Activated naive CD4-positive, alpha-beta T cell treated with anti-CD3 and anti-CD28 coated beads for 36 hours (primary cell): ENCODE measurements at regions of chr13 and their contacts with region 1.

Region 1: GRCh38 chr13:50130123-50130946 is 115.1 kb downstream of the KCNRG start:
- DNase-seq: peak; percentile 24
- H3K4me3 Mint-ChIP-seq: peak overlapping the region; percentile 66
- H3K27ac Mint-ChIP-seq: peak overlapping the region; percentile 50
- H3K4me1 Mint-ChIP-seq: peaks cover 62% of the 10 kb centered on the region
- H3K27me3 Mint-ChIP-seq: peaks cover 60% of the 10 kb centered on the region

Region 2: GRCh38 chr13:49967456-49967855 is 162.9 kb before region 1 on chr13:
- CTCF ChIA-PET with region 1: no interaction called
- intact Hi-C with region 1: no loop called
- DNase-seq: no peak
- H3K4me3 Mint-ChIP-seq: no peak overlapping the region
- H3K27ac Mint-ChIP-seq: no peak overlapping the region
- H3K4me1 Mint-ChIP-seq: no peaks in the 10 kb centered on the region
- H3K27me3 Mint-ChIP-seq: no peaks in the 10 kb centered on the region

Region 3: GRCh38 chr13:50140581-50141374 is 10.4 kb after region 1 on chr13:
- CTCF ChIA-PET with region 1: no interaction called
- intact Hi-C with region 1: loop called (anchors 1 kb)
- DNase-seq: no peak
- H3K4me3 Mint-ChIP-seq: no peak overlapping the region
- H3K27ac Mint-ChIP-seq: no peak overlapping the region
- H3K4me1 Mint-ChIP-seq: peaks cover 7% of the 10 kb centered on the region
- H3K27me3 Mint-ChIP-seq: peaks cover 16% of the 10 kb centered on the region

Region 4: GRCh38 chr13:50152655-50153309 is 22.4 kb after region 1 on chr13:
- CTCF ChIA-PET with region 1: no interaction called
- intact Hi-C with region 1: loop called (anchors 1 kb)
- DNase-seq: no peak
- H3K4me3 Mint-ChIP-seq: peak overlapping the region; percentile 17
- H3K27ac Mint-ChIP-seq: no peak overlapping the region
- H3K4me1 Mint-ChIP-seq: peaks cover 14% of the 10 kb centered on the region
- H3K27me3 Mint-ChIP-seq: peaks cover 7% of the 10 kb centered on the region

Region 5: DNA sequence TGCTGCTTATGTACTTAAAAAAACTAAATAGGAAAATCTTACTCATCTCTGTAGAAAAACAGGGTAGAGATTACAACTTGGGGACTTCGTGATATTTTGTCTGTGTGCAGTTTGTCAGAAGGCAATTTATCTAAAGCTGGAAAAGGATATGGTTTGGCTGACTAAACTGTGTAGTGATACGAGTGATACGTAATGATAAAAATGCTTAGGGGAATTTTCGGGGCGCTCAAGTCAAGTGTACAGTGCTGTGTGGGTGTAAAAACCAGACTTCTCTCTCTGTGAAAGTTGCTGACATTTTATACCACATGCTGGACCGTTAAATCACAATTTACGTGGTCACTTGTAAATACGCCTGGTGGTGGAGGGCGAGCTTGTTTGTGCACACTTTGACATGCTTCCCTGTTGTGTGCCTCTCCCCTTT is 106.6 kb after region 1 on chr13:
- CTCF ChIA-PET with region 1: no interaction called
- intact Hi-C with region 1: loop called (anchors 1 kb)
- DNase-seq: peak; percentile 62
- H3K4me3 Mint-ChIP-seq: no peak overlapping the region
- H3K27ac Mint-ChIP-seq: peak overlapping the region; percentile 61
- H3K4me1 Mint-ChIP-seq: peaks cover 48% of the 10 kb centered on the region
- H3K27me3 Mint-ChIP-seq: peaks cover 12% of the 10 kb centered on the region

Region 6: DNA sequence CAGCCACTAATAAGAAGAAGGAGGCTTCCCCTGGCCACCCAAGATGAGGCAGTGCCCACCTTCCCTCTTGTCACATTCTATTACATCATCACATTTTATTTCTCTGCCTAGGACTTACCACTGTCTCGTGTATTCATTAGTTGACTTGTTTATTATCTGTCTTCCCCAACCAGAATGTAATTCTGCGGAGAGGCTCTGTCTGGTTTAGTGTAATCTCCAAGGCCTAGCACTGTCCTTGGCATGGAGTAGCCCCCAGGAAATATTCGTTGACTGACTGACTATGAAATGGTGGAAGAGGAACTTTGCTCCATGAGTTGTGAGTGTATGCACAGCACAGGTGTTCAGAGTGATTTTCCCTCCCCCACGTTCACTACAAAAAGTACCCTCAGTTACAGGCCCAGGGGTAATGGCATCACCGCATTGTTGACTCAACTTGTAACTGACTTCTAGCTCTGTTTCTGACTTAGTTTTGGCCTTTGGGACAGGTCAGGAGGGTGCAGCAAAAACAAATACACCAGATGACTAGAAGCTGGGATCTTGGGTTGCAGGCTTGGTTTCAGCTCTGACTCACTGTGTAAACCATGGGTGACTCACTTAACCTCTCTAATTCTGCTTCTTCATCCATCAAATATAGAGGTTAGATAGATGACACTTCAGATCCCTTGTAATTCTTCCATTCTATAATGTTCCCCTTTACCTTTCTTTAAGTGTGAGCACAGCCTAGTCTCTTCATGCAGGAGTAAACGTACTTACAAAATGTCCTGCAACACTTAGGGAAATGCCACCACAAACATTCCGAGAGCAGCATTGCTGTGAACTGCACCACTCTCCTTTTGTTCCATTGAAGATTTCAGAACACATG is 114.6 kb after region 1 on chr13:
- CTCF ChIA-PET with region 1: no interaction called
- intact Hi-C with region 1: loop called (anchors 1 kb)
- DNase-seq: peak; percentile 84
- H3K4me3 Mint-ChIP-seq: no peak overlapping the region
- H3K27ac Mint-ChIP-seq: peak overlapping the region; percentile 72
- H3K4me1 Mint-ChIP-seq: peaks cover 30% of the 10 kb centered on the region
- H3K27me3 Mint-ChIP-seq: peaks cover 13% of the 10 kb centered on the region

Region 7: DNA sequence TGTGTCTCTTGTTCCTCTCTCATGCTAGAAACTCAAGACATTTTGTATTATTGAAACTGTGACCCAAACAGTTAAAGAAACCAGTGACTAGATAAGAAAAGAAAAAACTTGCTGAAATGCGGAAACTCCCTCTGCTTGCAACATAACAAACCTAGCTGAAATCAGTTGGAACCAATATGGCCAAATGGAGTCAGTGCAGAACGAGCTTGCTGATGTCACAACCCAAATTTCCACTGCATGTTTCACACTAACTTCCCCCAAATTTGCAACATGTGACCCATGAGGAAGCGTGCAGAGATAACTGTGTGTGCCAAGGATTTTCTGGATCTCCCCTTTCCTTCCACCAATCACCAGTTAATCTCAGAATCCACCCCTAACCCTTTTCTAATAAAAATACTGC is 505.2 kb after region 1 on chr13:
- CTCF ChIA-PET with region 1: no interaction called
- intact Hi-C with region 1: no loop called
- DNase-seq: no peak
- H3K4me3 Mint-ChIP-seq: no peak overlapping the region
- H3K27ac Mint-ChIP-seq: no peak overlapping the region
- H3K4me1 Mint-ChIP-seq: no peaks in the 10 kb centered on the region
- H3K27me3 Mint-ChIP-seq: no peaks in the 10 kb centered on the region